H1 (cell line): ENCODE measurements at regions of chr1 and their contacts with region 1.

Region 1: DNA sequence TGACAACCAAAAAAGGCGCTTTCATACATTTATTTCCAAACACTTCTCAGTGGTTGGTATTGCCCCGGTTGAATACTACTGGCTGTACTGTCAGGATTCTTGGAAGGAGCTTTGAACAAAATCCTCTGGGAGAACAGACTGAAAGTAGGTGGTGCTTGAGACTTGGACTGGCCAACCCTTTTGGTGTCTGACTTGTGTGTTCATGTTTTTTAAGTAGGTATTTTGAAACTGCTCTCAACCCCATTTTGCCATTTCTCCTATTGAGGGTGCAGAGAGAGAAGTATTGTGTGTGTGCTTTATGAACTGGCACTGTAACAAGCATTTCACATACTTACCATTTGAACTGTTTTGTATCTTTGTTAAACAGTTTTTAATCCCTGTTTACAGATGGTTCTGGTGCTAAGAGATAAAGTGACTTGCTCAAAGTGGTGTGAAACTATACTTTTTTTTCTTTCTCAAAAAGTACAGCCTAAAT is 21.2 kb downstream of the ARID1A start:
- DNase-seq: no peak
- H3K4me3 ChIP-seq: no peak overlapping the region
- H3K27ac ChIP-seq: no peak overlapping the region
- H3K4me1 ChIP-seq: no peaks in the 10 kb centered on the region; a peak in 2 of 7 replicates
- H3K27me3 ChIP-seq: no peaks in the 10 kb centered on the region
- CTCF ChIP-seq: no peak
- EP300 ChIP-seq: no peak
- POLR2A ChIP-seq: no peak
- RAD21 ChIP-seq: no peak

Region 2: GRCh38 chr1:26529655-26530409 is 187.2 kb before region 1 on chr1 and contains the start of gene RPS6KA1:
- CTCF ChIA-PET with region 1: no interaction called
- POLR2A ChIA-PET with region 1: no interaction called
- DNase-seq: peak in 1 of 2 experiments; percentile 88
- H3K4me3 ChIP-seq: peak within 1 kb of the TSS; percentile 51 to 97 (median 94)
- H3K27ac ChIP-seq: peak within 1 kb of the TSS; percentile 42; the same call in 1 of the 2 replicates
- H3K4me1 ChIP-seq: peaks cover 11 to 20% (median 19%) of the 10 kb centered on the region in 4 experiments
- H3K27me3 ChIP-seq: no peaks in the 10 kb centered on the region
- CTCF ChIP-seq: no peak
- EP300 ChIP-seq: no peak
- POLR2A ChIP-seq: peak; percentile 67 to 69; a peak in 2 of 3 replicates
- RAD21 ChIP-seq: no peak
- total RNA-seq, gene RPS6KA1: 55.0 and 56.5 TPM in 2 replicates

Region 3: DNA sequence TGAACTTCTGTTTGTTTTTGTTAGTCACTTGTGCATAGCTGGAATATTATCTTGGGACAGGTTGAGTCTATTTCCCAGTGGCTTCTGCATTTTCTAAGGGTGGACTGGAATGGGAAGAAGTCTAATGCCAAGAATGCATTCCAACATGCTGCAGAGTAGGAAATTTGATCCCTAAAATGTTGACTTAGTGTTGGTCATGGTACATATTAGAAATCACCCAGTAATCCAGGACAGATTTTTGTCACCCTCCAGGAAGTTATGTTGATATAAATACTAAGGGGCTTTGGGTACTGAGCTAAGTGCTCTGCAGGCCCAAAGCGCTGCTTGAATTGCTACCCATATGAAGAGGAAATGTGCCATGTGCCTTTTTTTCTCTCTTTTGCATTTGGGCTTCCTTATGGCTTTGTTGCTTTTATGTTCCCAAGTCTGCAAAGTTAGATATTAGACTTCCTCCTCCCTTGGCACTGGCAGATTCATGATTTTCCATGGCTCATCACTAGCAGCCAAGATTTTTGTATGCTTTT is 11.2 kb before region 1 on chr1:
- CTCF ChIA-PET with region 1: interaction called, 10 read pairs
- POLR2A ChIA-PET with region 1: interaction called, 256 read pairs
- DNase-seq: no peak
- H3K4me3 ChIP-seq: 0 out of 8 replicates have a peak overlapping the region, but pooled peaks of 1 of the 4 experiments have one; percentile 1
- H3K27ac ChIP-seq: no peak overlapping the region
- H3K4me1 ChIP-seq: peaks cover under 1 to 16% (median 12%) of the 10 kb centered on the region in 4 experiments; a peak in 6 of 7 replicates
- H3K27me3 ChIP-seq: no peaks in the 10 kb centered on the region
- CTCF ChIP-seq: no peak
- EP300 ChIP-seq: no peak
- POLR2A ChIP-seq: no peak
- RAD21 ChIP-seq: no peak

Region 4: GRCh38 chr1:26761217-26761616 is 44.2 kb after region 1 on chr1:
- CTCF ChIA-PET with region 1: no interaction called
- POLR2A ChIA-PET with region 1: no interaction called
- DNase-seq: no peak
- H3K4me3 ChIP-seq: no peak overlapping the region
- H3K27ac ChIP-seq: no peak overlapping the region
- H3K4me1 ChIP-seq: no peaks in the 10 kb centered on the region
- H3K27me3 ChIP-seq: no peaks in the 10 kb centered on the region
- CTCF ChIP-seq: peak in 2 of 3 experiments; percentile 4 to 26; a peak in 2 of 4 replicates
- EP300 ChIP-seq: no peak
- POLR2A ChIP-seq: no peak
- RAD21 ChIP-seq: no peak; a peak in 1 of 4 replicates